Dorsolateral prefrontal cortex (tissue), 120 donors: ENCODE measurements at regions of chr17 and their contacts with region 1.

Region 1: GRCh38 chr17:47229535-47230443 is 20.6 kb downstream of the MYL4 start:
- DNase-seq: peak; percentile 44 to 86 (median 80)
- H3K4me3 ChIP-seq: peak overlapping the region in 49 of 59 donors; percentile 4 to 58 (median 38)
- H3K27ac ChIP-seq: peak overlapping the region in 3 of 59 donors; percentile 6 to 55 (median 18)
- H3K27me3 ChIP-seq: peaks cover 0 to 4% (median 0%) of the 10 kb centered on the region in 45 donors
- CTCF ChIP-seq: peak; percentile 87 to 99 (median 98)

Region 2: DNA sequence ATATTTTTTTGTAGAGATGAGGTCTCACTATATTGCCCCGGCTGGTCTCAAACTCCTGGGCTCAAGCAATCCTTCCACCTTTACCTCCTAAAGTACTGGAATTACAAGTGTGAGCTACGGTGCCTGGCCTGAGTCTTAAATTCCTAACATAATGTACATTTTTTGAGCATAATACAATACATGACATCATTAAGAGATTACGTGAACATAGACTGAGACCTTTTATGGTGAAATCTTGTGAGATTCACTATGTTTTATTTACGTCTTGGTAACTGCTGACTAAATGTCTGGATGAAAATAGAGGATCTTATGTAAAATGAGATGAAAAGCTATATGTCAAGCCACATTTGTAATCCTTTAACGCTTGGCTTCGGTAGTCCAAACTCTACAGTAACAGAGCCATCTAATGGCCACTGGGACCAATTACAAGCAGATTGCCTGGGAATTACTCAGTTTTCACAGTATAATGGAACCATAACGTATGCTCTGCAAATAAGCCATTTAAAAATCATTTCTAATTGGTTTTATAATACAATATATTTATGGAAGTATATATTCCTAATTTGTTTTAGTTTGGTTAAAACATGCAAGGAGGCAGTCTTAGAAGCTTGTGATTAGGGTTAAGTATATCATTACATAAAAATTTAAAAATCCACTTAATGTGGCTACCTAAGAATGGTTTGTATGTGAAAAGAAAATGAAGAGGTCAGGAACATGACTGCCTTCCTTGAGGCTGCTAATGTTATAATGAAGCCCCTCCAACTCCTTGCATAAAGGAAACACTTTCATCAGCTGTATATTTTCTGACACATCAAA is 85.9 kb after region 1 on chr17:
- intact Hi-C with region 1: loop called (anchors 1 to 5 kb)
- DNase-seq: peak in 3 of 10 donors; percentile 23 to 53 (median 43)
- H3K4me3 ChIP-seq: peak overlapping the region in 7 of 59 donors; percentile 3 to 31 (median 12)
- H3K27ac ChIP-seq: peak overlapping the region in 9 of 59 donors; percentile 7 to 56 (median 30)
- H3K27me3 ChIP-seq: no peaks in the 10 kb centered on the region
- CTCF ChIP-seq: peak; percentile 64 to 98 (median 86)

Region 3: GRCh38 chr17:47352848-47353247 is 123.1 kb after region 1 on chr17:
- intact Hi-C with region 1: no loop called
- DNase-seq: no peak
- H3K4me3 ChIP-seq: no peak overlapping the region
- H3K27ac ChIP-seq: no peak overlapping the region
- H3K27me3 ChIP-seq: no peaks in the 10 kb centered on the region
- CTCF ChIP-seq: no peak